SK-MEL-5 (cell line): ENCODE measurements at regions of chr2 and their contacts with region 1.

Region 1: GRCh38 chr2:209771474-209772289 is at the start of gene UNC80:
- DNase-seq: peak; percentile 61
- total RNA-seq, gene UNC80: 2.1 and 2.8 TPM in 2 replicates

Region 2: GRCh38 chr2:209619782-209620181 is 151.9 kb before region 1 on chr2:
- in situ Hi-C with region 1: loop called (anchors 25 kb)
- DNase-seq: no peak

Region 3: GRCh38 chr2:209917154-209918047 is 145.7 kb after region 1 on chr2:
- in situ Hi-C with region 1: no loop called
- DNase-seq: peak; percentile 28